PC-9 (cell line): ENCODE measurements at regions of chr10 and their contacts with region 1.

Region 1: DNA sequence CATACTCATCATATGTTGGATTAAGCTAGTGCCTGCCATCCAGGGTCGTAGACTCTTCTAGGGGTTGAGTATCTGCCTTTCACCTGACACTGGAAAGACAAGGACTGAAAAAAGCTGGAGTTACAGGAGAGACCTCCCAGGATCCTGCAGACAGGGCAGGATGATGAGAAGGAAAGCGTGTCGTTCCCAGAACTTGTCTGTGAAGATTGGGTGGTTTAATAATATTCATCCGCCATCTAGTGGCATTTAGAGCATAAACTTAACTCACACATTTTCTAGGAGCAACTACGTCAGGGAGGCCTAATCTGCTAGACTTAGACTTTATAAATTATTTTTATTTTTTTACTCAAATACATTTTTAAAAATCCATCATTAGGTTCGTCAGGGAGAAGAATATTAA is 59.6 kb downstream of the ADRB1 start:
- DNase-seq: peak in 1 of 2 experiments; percentile 3
- H3K4me3 ChIP-seq: no peak overlapping the region
- H3K27ac ChIP-seq: no peak overlapping the region
- H3K4me1 ChIP-seq: no peaks in the 10 kb centered on the region
- H3K27me3 ChIP-seq: peaks cover 5% of the 10 kb centered on the region; the same call in 1 of the 2 replicates
- CTCF ChIP-seq: peak; percentile 66

Region 2: GRCh38 chr10:113704637-113705343 is 398.5 kb before region 1 on chr10:
- CTCF ChIA-PET with region 1: no interaction called
- POLR2A ChIA-PET with region 1: no interaction called
- intact Hi-C with region 1: loop called (anchors 1 kb)
- DNase-seq: no peak
- H3K4me3 ChIP-seq: no peak overlapping the region
- H3K27ac ChIP-seq: no peak overlapping the region
- H3K4me1 ChIP-seq: no peaks in the 10 kb centered on the region
- H3K27me3 ChIP-seq: no peaks in the 10 kb centered on the region
- CTCF ChIP-seq: peak; percentile 76

Region 3: GRCh38 chr10:113802997-113803396 is 300.3 kb before region 1 on chr10:
- CTCF ChIA-PET with region 1: interaction called, 6 read pairs
- POLR2A ChIA-PET with region 1: no interaction called
- intact Hi-C with region 1: loop called (anchors 1 kb)
- DNase-seq: no peak
- H3K4me3 ChIP-seq: no peak overlapping the region
- H3K27ac ChIP-seq: no peak overlapping the region
- H3K4me1 ChIP-seq: no peaks in the 10 kb centered on the region
- H3K27me3 ChIP-seq: no peaks in the 10 kb centered on the region
- CTCF ChIP-seq: no peak

Region 4: GRCh38 chr10:113854011-113854760 is 249.1 kb before region 1 on chr10 and contains the starts of genes DCLRE1A and NHLRC2:
- CTCF ChIA-PET with region 1: no interaction called
- POLR2A ChIA-PET with region 1: no interaction called
- intact Hi-C with region 1: loop called (anchors 5 kb)
- DNase-seq: peak; percentile 44 to 52
- H3K4me3 ChIP-seq: peak within 1 kb of the TSS; percentile 84
- H3K27ac ChIP-seq: peak within 1 kb of the TSS; percentile 65
- H3K4me1 ChIP-seq: peaks cover 28% of the 10 kb centered on the region
- H3K27me3 ChIP-seq: no peaks in the 10 kb centered on the region
- CTCF ChIP-seq: no peak
- total RNA-seq, gene DCLRE1A: 6.1 and 7.7 TPM in 2 replicates
- total RNA-seq, gene NHLRC2: 22.5 and 22.8 TPM in 2 replicates

Region 5: DNA sequence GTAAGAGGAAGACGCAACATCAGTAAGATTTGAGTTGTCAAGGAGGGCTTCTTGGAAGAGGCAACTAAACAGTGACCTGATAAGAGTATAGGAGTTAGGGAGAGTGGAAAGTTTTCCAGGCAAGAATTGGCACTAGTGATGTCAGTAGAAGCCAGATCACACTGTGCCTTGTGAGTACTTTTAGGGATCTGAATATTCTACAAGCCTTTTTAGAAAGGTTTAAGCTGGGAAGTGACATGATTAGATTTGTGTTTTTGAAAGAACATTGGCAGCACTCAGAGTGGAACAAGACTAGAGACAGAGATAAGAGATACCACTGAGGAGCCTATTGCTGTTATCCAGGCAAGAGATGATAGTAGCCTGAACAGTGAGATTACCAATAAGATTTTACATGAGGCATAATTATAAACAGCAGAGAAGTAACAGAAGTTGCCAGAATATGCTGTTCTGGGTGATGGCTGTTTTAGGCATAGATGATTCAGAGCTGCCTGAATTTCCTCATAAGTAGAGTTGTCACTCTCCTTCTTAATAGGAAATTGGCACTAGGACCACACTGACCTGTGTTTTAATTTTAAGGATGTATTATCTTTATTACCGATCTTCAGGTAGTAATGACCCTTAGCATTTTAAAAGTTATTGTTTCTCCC is 203.2 kb before region 1 on chr10:
- CTCF ChIA-PET with region 1: no interaction called
- POLR2A ChIA-PET with region 1: no interaction called
- intact Hi-C with region 1: loop called (anchors 5 kb)
- DNase-seq: no peak
- H3K4me3 ChIP-seq: no peak overlapping the region
- H3K27ac ChIP-seq: no peak overlapping the region
- H3K4me1 ChIP-seq: peaks cover 5% of the 10 kb centered on the region
- H3K27me3 ChIP-seq: no peaks in the 10 kb centered on the region
- CTCF ChIP-seq: no peak

Region 6: DNA sequence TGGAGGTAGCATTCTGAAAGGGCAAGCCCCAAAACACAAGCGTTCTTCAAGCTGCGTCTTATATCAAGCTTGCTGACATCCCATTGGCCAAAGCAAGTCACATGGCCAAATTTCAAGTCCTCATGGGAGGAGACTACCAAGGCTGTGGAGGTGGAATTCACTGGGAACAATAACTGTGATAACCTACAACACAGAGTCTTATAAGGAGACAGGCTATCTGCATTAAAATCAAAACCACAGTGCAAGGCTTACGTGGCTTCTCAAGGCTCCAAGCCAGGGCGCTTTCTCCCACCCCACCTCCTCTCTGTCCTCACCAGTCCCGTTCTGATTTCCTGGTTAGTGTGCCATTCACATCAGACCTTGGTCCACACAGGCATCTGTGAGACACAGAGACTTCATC is 20.2 kb before region 1 on chr10:
- CTCF ChIA-PET with region 1: no interaction called
- POLR2A ChIA-PET with region 1: no interaction called
- intact Hi-C with region 1: no loop called
- DNase-seq: peak in 1 of 2 experiments; percentile 67
- H3K4me3 ChIP-seq: no peak overlapping the region
- H3K27ac ChIP-seq: no peak overlapping the region
- H3K4me1 ChIP-seq: no peaks in the 10 kb centered on the region; the same call in 1 of the 2 replicates
- H3K27me3 ChIP-seq: no peaks in the 10 kb centered on the region
- CTCF ChIP-seq: no peak